Vagina (tissue), 2 donors: ENCODE measurements at regions of chr1 and their contacts with region 1.

Region 1: DNA sequence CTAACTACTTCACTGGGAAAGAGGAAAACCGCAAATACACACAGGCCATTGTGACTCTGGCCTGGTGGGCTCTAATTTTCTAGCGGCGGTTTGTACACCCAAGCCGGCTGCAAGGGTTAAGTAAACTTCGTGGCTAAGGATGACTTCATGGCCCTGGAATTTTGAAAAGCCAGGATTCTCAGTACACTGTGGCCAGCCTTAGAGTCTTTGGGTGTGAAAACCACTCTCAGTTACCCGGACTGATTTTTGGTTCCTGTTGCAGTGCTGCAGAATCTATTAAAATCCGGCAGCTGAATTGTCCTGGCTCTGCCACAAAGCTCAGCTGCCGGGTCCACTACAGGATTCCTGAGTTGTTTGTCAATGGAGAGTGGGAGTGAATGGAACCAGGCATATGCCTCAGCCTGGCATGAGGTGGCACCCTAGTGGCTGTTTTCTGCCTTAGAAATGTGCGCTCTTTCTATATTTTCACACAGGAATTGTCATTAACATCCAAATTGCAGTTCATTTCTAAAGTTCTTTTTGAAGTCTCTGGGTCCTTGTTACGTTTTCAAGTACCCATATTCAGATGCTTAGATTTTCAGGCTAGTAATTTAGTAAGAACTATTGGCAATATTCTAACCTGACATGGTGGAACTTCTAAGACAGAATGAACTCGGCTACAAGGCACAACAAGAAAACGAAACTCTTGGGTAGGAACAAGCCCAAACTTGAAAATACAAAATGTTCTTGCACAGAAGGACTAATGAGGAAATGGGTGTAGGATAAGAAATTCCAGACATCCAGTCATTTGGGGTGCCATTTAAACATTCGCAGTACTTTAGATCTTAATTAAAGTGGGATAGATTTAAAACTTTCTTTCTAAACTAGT is 255.9 kb downstream of the NFIA start:
- DNase-seq: no peak
- H3K4me3 ChIP-seq: peak overlapping the region in 1 of 2 donors; percentile 24
- H3K27ac ChIP-seq: peak overlapping the region; percentile 47
- H3K4me1 ChIP-seq: peaks cover 27% of the 10 kb centered on the region
- H3K27me3 ChIP-seq: no peaks in the 10 kb centered on the region
- CTCF ChIP-seq: peak in 2 of 3 experiments; percentile 51 to 69
- POLR2A ChIP-seq: no peak

Region 2: GRCh38 chr1:61077676-61078541 is 260.3 kb before region 1 on chr1:
- intact Hi-C with region 1: loop called (anchors 10 kb)
- DNase-seq: peak in 1 of 2 donors; percentile 94
- H3K4me3 ChIP-seq: peak overlapping the region; percentile 53 to 66
- H3K27ac ChIP-seq: peak overlapping the region; percentile 82
- H3K4me1 ChIP-seq: peaks cover 44% of the 10 kb centered on the region
- H3K27me3 ChIP-seq: no peaks in the 10 kb centered on the region
- CTCF ChIP-seq: no peak
- POLR2A ChIP-seq: no peak

Region 3: DNA sequence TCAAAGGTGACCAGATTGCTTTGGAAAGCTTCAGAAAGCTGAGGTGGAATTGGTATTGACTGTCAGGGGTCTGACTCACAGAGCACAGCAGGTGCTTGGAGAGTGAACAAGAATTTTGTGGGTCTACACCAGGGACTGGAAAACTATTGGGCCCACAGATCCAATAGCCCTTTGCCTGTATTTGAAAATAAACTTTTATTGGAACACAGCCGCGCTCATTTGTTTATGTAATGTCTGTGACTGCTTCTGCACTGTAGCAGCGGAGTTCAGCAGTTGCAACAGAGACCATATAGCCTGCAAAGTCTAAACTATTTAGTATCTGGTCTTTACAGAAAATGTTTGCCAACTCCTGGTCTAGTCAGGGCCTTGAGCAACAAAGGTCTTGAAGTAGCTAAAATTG is 59.7 kb after region 1 on chr1:
- intact Hi-C with region 1: loop called (anchors 5 kb)
- DNase-seq: no peak
- H3K4me3 ChIP-seq: no peak overlapping the region
- H3K27ac ChIP-seq: no peak overlapping the region
- H3K4me1 ChIP-seq: peaks cover 19% of the 10 kb centered on the region
- H3K27me3 ChIP-seq: no peaks in the 10 kb centered on the region
- CTCF ChIP-seq: no peak
- POLR2A ChIP-seq: no peak

Region 4: DNA sequence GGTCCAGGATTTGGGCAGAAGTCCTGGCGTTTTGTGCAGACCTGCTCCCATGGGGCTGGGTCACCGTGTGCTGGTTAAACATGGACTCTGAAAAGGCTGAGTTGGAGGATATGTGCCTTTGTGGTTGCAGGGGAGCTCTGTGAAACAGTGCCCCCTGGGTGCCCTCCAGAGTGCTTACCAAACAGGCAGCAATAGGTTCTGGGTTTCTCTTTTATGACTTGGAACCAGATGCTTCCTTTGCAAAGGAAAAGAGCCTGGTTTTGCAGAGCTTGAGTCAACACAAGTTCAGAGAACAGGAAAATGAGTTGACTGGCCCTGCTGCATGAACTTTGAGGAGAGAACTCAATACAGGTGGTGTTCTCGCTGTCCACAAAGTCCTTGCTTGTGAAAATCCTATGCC is 97.8 kb after region 1 on chr1:
- intact Hi-C with region 1: no loop called
- DNase-seq: no peak
- H3K4me3 ChIP-seq: no peak overlapping the region
- H3K27ac ChIP-seq: no peak overlapping the region
- H3K4me1 ChIP-seq: peaks cover 26% of the 10 kb centered on the region
- H3K27me3 ChIP-seq: no peaks in the 10 kb centered on the region
- CTCF ChIP-seq: no peak
- POLR2A ChIP-seq: no peak

Region 5: DNA sequence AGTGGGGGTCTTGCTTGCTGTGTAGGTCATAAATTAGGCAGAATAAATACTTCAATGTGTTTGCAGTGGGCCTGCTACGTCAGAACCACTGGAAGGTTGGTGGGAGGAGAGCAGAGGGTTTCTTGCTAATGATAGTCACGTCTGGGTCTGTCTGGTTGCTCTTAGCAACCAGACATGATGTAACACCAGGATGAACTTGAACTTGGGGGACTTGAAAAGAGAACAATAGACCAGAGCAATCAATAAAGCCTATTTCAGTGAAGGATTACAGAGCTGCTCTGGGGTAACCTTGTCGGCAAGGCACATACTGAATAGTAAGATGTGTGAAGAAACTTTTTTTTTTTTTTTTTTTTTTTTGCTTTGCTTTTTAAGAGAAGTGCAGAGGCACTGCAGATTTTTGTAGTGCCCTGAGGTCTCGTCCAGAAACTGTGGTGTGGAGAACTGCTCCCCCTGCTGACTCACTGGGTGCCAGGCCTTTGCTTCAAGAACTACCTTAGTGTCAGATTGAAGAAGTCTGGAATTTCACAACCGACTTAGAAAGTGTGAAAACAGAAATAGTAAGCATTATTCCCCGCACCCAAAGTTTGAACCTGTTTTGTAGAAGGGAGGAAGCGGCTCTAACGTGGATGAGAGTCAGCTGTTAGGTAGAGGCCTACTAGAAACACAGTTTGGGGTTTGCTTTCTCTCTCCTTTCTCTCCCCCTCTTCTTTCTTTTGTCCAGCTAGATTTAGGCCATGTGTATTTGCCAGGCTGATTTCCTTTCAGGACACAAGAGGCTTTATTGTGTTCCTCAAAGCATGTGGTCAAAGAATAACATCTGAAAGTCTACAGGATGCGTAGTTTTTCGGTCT is 115.1 kb after region 1 on chr1:
- intact Hi-C with region 1: loop called (anchors 5 kb)
- DNase-seq: peak in 1 of 2 donors; percentile 95
- H3K4me3 ChIP-seq: no peak overlapping the region
- H3K27ac ChIP-seq: peak overlapping the region; percentile 54
- H3K4me1 ChIP-seq: peaks cover 56% of the 10 kb centered on the region
- H3K27me3 ChIP-seq: no peaks in the 10 kb centered on the region
- CTCF ChIP-seq: peak; percentile 12 to 66 (median 58)
- POLR2A ChIP-seq: no peak